Posterior vena cava (tissue), 2 donors: ENCODE measurements at regions of chr14 and their contacts with region 1.

Region 1: DNA sequence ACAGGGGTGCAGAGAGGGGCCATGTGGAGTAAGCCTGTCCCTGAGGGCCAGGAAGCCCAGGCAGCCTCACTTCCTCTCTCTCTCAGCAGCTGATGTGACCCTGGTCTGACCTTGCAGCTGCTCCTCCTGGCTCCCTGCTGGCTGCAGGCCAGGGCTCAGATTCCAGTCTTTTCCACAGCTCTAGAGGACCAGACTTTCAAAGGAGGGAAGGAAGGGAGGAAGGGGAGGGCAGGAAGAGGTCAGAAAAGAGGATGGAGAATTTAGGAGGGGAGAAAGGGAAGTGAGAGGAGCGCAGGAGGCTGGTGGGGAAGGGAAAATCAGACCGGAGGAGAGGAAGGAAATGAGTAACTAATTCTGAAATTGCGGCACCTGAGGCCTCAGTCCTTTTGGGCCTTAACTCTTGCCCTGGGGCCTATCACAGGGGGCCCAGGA is 40.9 kb upstream of the VASH1 start:
- DNase-seq: peak; percentile 87

Region 2: DNA sequence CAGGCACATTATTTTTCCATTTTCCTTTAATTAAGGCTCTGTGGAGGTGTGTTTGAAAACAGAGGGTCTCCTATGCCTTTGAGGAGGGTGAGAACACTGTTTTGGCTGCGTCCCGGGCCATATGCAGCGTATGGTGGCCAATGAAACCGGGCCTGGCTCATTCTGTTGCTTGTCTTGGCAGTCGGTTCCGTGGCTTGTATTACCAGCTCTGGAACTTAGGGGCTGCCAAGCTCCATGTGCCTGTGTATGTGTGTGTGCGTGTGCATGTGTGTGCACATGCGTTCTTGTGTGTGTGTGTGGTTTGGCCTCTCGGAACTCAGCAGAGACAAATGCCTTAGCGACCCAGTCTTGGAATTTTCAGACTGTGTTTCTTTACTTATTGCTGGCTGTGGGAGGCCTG is 1289.9 kb before region 1 on chr14:
- intact Hi-C with region 1: loop called in 1 of 2 experiments (anchors 5 kb)
- DNase-seq: no peak